ENCODE measurements at regions of chr2 and their contacts with region 1.

Region 1: DNA sequence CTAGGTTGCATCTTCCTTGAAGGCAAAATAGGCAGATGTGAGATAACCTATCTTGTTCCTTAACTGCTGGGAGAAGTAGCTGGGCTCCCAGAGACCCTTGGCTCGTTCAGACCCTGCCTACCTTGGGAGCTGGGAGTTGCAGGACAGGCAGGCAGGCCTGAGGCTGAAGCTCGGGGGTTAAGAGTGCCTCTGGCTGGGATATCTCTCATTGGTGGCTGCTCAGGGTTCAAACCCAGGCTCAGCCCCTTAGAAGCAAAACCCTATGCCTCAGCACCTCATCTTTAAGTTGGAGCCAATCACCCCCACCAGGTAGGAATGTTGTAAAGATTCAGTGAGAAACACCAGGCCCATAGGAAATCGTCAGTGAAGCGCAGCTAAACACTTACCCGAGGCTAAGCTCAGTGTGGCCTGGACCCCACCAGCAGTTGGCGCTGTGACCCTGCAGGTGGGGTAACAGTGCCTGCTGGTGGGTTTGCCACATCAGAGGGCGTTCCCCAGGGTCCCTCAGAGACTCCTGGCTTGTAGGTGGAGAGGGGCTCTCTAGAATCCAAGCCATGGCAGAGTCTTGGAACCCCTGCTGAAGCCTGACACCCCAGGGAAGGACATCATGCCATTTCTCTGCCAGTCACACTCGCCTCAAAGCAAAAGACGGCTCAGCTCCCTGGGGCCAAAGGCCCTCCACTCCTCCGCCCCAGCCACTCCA is 54.6 kb upstream of the GPR17 start:
- DNase-seq: peak; percentile 72
- H3K27ac ChIP-seq: no peak overlapping the region
- CTCF ChIP-seq: peak; percentile 75

Region 2: DNA sequence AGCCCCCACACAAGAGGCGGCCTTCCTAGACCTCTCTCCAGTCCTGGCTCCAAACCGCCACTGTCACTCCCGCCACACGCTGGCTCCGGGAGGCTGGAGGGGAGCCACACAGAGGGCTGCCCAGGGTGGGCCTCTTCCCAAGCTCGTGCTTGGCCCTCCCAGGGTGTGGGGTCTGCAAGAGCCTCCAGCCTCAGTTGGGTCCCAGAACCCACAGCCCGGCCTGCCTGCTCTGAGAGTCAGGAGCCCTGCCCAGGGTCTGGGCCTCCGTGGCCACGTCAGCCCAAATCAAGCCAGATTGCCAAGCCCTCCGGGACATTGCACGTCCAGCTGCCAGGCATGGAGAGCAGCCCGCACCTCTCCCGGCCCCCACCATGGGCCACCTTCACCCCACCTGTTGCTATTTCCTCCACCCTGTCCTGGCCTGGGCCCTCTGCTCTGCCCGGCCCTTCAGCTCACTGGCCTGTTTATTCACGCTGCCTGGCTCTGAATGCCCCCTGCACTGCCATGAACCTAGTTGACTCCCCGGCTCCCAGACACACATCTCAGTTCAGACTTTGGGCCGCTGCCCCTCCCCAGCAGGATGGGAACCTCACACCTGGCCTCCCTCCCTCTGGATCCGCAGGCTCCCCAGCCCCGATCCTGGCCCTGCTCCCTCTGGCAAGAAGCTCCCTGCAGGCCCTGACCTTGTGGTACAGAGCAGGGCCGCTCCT is 545.4 kb before region 1 on chr2:
- CTCF ChIA-PET with region 1: no interaction called
- POLR2A ChIA-PET with region 1: no interaction called
- DNase-seq: no peak
- H3K27ac ChIP-seq: no peak overlapping the region
- CTCF ChIP-seq: no peak

Region 3: GRCh38 chr2:127649684-127650040 is 58.3 kb after region 1 on chr2:
- CTCF ChIA-PET with region 1: interaction called, 55 read pairs
- POLR2A ChIA-PET with region 1: no interaction called
- DNase-seq: peak; percentile 69
- H3K27ac ChIP-seq: no peak overlapping the region
- CTCF ChIP-seq: peak; percentile 77

Region 4: DNA sequence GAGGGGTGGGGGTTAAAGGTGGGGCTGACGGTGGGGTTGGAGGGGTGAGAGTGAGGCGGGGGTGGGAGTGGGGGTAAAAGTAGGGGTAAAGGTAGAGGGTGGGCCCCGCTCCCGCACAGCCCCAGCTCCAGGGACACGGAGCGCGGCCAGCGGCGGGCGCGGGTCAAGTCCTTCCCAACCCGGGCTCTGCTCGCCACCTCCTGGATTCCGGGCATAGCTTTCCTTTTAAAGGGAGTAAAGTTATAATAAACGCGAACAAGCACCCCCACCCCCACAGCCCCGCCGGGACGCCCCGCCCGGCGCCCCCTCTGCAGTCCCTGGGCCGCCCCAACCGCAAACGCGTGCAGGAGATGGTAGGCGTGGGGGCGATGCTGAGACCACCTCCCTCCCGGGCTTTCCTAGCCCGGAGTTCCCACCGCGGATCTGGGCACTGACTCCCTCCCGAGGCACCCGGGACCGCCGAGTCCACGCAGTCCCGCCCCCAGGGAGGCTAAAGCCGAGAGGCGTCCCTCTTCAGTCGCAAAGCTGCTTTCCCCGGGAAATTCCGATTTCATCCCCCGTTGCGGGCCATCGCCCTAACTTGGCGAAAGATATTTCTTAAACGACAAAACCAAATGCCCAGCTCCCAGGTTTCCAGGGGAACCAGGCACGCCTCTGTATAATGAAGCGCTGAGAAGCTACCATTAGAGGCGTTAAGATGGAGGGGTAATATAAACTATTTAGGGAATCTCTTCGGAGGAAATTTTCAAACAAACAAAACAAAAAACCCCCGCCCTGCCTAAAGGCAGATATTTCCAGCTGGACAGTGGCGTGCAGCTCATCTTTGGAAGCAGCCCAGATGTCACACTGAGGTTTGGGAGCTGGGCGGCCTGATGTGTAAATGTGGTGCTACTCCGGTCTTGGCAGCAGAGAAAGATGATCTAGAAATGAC is 84.2 kb after region 1 on chr2 and contains the start of gene LIMS2:
- CTCF ChIA-PET with region 1: interaction called, 15 read pairs
- POLR2A ChIA-PET with region 1: no interaction called
- DNase-seq: peak; percentile 53
- H3K27ac ChIP-seq: no peak within 1 kb of the TSS
- CTCF ChIP-seq: no peak

Region 5: DNA sequence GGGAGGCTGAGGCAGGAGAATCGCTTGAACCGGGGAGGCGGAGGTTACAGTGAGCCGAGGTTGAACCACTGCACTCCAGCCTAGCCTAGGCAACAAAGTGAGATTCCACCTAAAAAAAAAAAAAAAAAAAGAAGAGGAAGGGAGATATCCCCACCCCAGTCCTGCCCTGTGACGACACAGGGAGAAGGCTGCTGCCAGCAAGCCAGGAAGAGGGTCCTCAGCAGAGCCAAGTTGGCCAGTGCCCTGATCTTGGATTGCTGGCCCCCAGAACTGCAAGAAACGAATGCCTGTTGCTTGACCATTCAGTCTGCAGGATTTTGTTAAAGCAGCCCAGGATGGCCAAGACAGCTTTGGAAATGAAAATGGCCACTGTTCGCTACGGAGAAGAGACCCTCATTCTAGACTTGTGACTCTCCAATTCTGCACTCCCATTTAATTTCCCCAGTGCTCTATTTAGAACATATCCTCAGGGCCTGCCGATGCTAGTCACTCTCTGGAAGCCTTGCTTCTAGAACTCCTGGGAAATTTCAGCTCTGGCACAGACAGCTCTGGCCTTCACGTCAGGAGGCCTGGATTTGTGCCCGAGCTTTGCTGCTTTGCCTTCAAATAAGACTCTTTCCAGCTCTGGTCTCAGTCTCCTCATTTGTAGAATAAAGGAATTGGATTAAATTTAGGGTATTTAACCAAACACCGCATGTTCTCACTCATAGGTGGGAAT is 310.1 kb after region 1 on chr2:
- CTCF ChIA-PET with region 1: no interaction called
- POLR2A ChIA-PET with region 1: no interaction called
- DNase-seq: no peak
- H3K27ac ChIP-seq: no peak overlapping the region
- CTCF ChIP-seq: no peak